ENCODE measurements at regions of chr3 and their contacts with region 1.

Region 1: DNA sequence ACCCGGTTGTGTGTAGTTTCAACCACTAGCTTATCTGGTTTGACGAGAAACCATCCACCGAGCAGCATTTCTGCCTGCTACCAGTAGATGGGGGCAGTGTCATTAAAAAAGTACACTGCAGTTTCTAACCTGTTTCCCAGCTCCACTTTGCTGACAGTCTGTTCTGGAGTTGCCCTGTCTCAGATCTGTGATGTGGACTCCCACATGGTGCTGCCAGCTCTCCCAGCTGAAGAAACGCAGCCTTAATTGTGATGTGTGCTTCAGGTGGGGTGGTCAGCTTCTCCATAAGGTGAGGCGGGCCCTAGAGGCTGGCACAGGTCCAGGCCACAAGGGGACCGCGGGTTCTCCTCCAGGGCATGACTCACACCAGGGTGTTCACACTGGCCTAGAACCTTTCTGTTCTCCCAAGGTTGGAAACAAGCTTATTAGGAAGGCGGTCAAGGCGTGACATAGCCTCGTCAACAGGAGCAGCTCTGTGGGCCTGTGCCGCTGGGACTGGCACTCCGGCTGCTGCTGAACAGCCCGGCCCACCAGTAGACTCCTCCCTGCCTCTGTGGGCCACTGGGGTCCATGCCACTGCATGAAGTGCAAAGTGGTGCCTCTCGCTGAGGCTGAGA is 2.9 kb upstream of the FAM43A start:
- DNase-seq: no peak
- ATAC-seq: peak; percentile 86
- H3K4me3 ChIP-seq: no peak overlapping the region
- H3K27ac ChIP-seq: no peak overlapping the region
- H3K4me1 ChIP-seq: peaks cover 36% of the 10 kb centered on the region
- H3K27me3 ChIP-seq: peaks cover 0 to 5% of the 10 kb centered on the region in 2 experiments; a peak in 2 of 4 replicates
- CTCF ChIP-seq: peak; percentile 88 to 97 (median 94); a peak in 5 of 6 replicates
- EP300 ChIP-seq: no peak
- POLR2A ChIP-seq: no peak
- RAD21 ChIP-seq: peak; percentile 95

Region 2: DNA sequence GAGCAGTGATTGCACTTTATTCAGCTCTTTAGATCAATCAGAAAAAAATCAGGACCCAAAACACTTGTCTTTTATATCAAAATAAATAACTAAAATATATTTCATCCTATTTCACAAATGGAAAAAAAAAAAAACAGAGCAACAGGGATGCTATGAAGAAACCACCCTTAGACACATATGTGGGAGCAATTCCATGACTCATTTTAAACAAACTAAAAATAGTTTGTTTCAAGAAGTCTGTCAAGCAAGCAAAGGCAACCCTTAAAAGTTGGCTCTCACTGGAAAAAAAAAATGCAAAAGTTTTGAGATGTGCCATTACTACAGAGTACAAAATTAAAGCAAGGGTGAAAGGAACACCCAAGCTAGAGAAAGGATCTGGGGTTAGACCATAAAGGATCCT is 201.7 kb before region 1 on chr3:
- CTCF ChIA-PET with region 1: no interaction called
- POLR2A ChIA-PET with region 1: no interaction called
- RAD21 ChIA-PET with region 1: no interaction called
- SMC1A ChIA-PET with region 1: no interaction called
- in situ Hi-C with region 1: no loop called
- intact Hi-C with region 1: no loop called
- DNase-seq: no peak
- ATAC-seq: no peak
- H3K4me3 ChIP-seq: peak overlapping the region; percentile 17; the same call in 1 of the 2 replicates
- H3K27ac ChIP-seq: no peak overlapping the region
- H3K4me1 ChIP-seq: peaks cover 5% of the 10 kb centered on the region; the same call in 1 of the 2 replicates
- H3K27me3 ChIP-seq: no peaks in the 10 kb centered on the region
- CTCF ChIP-seq: no peak
- EP300 ChIP-seq: no peak
- POLR2A ChIP-seq: no peak
- RAD21 ChIP-seq: no peak

Region 3: DNA sequence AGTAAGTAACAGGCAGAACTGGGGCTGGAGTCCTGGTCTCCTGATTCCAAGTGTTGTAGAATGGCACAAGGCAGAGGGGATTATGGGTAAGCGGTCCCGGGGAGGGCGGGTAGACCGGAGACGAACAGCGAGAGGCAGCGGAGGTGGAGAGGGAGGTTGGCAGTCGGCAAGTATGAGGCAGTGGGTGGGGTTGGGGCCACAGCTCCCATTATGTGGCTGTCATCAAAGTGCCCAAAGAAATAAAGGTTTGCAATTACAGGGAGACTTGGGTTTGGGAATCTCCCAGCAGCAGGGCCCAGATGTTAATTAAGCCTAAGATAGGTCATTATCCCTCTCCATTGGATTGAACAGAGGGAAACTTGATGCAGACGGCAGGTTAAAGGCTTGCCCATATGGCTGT is 19.7 kb after region 1 on chr3:
- CTCF ChIA-PET with region 1: no interaction called
- POLR2A ChIA-PET with region 1: no interaction called
- RAD21 ChIA-PET with region 1: no interaction called
- SMC1A ChIA-PET with region 1: no interaction called
- in situ Hi-C with region 1: no loop called
- intact Hi-C with region 1: no loop called
- DNase-seq: no peak
- ATAC-seq: no peak
- H3K4me3 ChIP-seq: no peak overlapping the region
- H3K27ac ChIP-seq: no peak overlapping the region
- H3K4me1 ChIP-seq: no peaks in the 10 kb centered on the region
- H3K27me3 ChIP-seq: peaks cover 0 to 3% of the 10 kb centered on the region in 2 experiments; a peak in 2 of 4 replicates
- CTCF ChIP-seq: no peak
- EP300 ChIP-seq: no peak
- POLR2A ChIP-seq: no peak
- RAD21 ChIP-seq: no peak

Region 4: DNA sequence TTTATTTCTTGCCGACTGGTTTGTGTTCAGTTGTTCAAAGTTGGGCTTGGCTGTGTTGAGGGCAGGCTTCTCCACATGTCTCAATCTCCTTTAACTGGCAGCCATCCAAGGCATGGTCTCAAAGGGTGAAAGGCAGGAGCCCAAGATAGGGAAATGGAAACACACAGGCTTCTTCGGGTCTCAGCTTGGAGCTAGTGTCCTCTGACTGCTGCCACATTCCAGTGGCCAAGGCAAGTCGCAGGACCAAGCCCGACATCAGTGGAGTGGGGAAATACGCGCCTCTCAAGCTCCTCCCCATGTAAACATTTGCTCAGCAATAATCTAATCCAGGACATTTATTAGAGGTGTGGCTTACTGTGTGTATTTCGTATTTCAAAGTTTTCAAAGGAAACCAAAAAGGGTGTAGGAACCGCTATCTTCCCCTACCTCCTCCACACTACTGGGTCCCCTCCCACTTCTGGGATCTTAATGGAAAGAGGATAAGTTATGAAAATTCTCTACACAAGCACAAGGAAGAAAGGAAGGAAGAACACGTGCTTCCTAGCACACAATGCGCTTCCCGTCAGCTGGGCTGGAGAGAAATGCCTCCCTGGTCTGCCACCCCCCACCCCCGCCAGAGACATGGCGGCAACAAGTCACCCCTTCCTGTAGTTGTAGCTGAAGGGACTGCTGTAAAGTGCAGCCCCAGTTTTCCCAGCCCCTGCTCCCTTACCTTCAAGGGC is 184.6 kb after region 1 on chr3:
- CTCF ChIA-PET with region 1: no interaction called
- POLR2A ChIA-PET with region 1: no interaction called
- RAD21 ChIA-PET with region 1: no interaction called
- SMC1A ChIA-PET with region 1: no interaction called
- in situ Hi-C with region 1: no loop called
- intact Hi-C with region 1: loop called (anchors 5 kb)
- DNase-seq: no peak
- ATAC-seq: no peak
- H3K4me3 ChIP-seq: no peak overlapping the region
- H3K27ac ChIP-seq: no peak overlapping the region
- H3K4me1 ChIP-seq: peaks cover 13% of the 10 kb centered on the region; the same call in 1 of the 2 replicates
- H3K27me3 ChIP-seq: peaks cover 0 to 3% of the 10 kb centered on the region in 2 experiments; a peak in 2 of 4 replicates
- CTCF ChIP-seq: no peak
- EP300 ChIP-seq: no peak
- POLR2A ChIP-seq: no peak
- RAD21 ChIP-seq: no peak

Region 5: DNA sequence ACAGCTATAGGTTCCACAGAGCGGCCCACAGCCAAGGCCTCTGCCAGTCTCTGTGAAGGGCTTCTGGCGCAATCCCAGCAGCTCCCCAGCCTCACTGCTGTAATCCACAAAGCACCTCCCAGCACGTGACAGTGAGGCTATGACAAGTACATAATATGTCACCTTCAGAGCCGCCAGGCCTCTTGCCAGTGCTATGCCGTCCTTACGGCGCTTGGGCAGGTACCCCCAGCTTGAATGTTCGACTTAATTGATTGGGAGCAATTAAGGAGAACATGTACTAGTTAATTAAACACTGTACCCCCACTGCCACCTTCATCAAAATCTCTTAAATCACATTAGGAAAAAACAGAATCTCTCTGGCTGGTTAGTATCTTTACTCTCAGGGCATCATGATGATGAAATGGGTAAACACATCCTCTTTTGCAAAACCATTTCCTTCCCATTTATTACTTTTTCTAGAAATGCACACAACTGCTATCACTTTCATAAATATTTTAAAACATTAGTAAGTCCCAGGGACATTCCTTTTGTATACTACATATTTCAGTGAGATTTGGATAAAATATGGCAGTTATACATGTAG is 418.3 kb after region 1 on chr3:
- CTCF ChIA-PET with region 1: interaction called, 61 read pairs
- POLR2A ChIA-PET with region 1: no interaction called
- RAD21 ChIA-PET with region 1: interaction called, 36 read pairs
- SMC1A ChIA-PET with region 1: interaction called, 23 read pairs
- in situ Hi-C with region 1: loop called (anchors 5 kb)
- intact Hi-C with region 1: loop called (anchors 1 kb)
- DNase-seq: no peak
- ATAC-seq: peak; percentile 68
- H3K4me3 ChIP-seq: no peak overlapping the region
- H3K27ac ChIP-seq: peak overlapping the region; percentile 43
- H3K4me1 ChIP-seq: peaks cover 28% of the 10 kb centered on the region
- H3K27me3 ChIP-seq: no peaks in the 10 kb centered on the region
- CTCF ChIP-seq: no peak
- EP300 ChIP-seq: no peak
- POLR2A ChIP-seq: no peak
- RAD21 ChIP-seq: no peak

Region 6: DNA sequence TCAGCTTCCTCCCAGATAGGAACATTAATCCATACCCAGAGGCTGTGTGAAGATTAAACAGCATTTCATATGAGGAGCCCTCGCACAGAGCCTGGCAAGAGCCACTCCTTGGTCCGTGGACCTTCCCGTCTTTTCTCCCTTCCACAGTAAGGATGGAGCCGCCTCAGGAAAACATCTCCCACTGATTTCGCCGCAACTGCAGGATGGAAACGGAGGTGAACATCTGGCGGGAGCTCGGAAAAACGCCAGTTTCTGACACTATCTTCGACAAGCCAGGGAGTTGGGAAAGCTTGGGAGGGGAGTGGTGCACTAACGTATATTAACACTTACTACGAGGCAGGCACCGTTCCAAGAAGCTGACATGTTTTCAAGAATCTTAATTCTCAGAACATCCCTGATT is 430.2 kb after region 1 on chr3:
- CTCF ChIA-PET with region 1: interaction called, 61 read pairs
- POLR2A ChIA-PET with region 1: no interaction called
- RAD21 ChIA-PET with region 1: interaction called, 36 read pairs
- SMC1A ChIA-PET with region 1: interaction called, 6 read pairs
- in situ Hi-C with region 1: no loop called
- intact Hi-C with region 1: no loop called
- DNase-seq: no peak
- ATAC-seq: no peak
- H3K4me3 ChIP-seq: no peak overlapping the region
- H3K27ac ChIP-seq: no peak overlapping the region
- H3K4me1 ChIP-seq: no peaks in the 10 kb centered on the region
- H3K27me3 ChIP-seq: no peaks in the 10 kb centered on the region
- CTCF ChIP-seq: no peak
- EP300 ChIP-seq: no peak
- POLR2A ChIP-seq: no peak
- RAD21 ChIP-seq: no peak

Region 7: DNA sequence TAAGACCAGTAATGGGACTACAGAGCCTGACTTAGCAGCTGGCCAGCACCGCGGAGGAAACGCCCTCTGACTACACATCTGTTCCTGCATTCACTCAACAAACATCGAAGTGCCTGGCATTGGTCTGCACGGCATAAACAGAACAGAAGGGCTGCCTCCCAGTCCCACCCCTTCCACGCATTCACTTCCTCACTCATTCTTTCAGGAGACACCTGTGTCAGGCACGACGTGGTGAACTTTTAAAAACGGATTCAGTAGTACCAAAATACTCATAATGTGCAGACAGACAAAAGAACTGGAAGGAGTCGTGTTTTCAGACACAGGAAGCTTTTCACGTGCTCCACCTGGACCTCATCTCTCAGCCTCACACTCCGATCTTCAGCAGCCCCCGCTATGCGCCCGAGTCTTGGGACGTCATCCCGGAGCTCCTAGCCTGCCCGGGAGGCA is 464.9 kb after region 1 on chr3:
- CTCF ChIA-PET with region 1: interaction called, 7 read pairs
- POLR2A ChIA-PET with region 1: no interaction called
- RAD21 ChIA-PET with region 1: interaction called, 11 read pairs
- SMC1A ChIA-PET with region 1: interaction called, 8 read pairs
- in situ Hi-C with region 1: no loop called
- intact Hi-C with region 1: no loop called
- DNase-seq: peak; percentile 91
- ATAC-seq: peak; percentile 83
- H3K4me3 ChIP-seq: peak overlapping the region; percentile 93
- H3K27ac ChIP-seq: peak overlapping the region; percentile 91
- H3K4me1 ChIP-seq: peaks cover 46% of the 10 kb centered on the region
- H3K27me3 ChIP-seq: no peaks in the 10 kb centered on the region
- CTCF ChIP-seq: no peak
- EP300 ChIP-seq: no peak
- POLR2A ChIP-seq: peak; percentile 79
- RAD21 ChIP-seq: no peak

Region 8: GRCh38 chr3:195259475-195260279 is 576.9 kb after region 1 on chr3:
- CTCF ChIA-PET with region 1: interaction called, 44 read pairs
- POLR2A ChIA-PET with region 1: interaction called, 4 read pairs
- RAD21 ChIA-PET with region 1: interaction called, 41 read pairs
- SMC1A ChIA-PET with region 1: interaction called, 34 read pairs
- in situ Hi-C with region 1: no loop called
- intact Hi-C with region 1: loop called (anchors 1 kb)
- DNase-seq: peak; percentile 69
- ATAC-seq: peak; percentile 85
- H3K4me3 ChIP-seq: peak overlapping the region; percentile 77; the same call in 1 of the 2 replicates
- H3K27ac ChIP-seq: peak overlapping the region; percentile 85
- H3K4me1 ChIP-seq: peaks cover 21% of the 10 kb centered on the region
- H3K27me3 ChIP-seq: no peaks in the 10 kb centered on the region
- CTCF ChIP-seq: peak; percentile 54 to 77 (median 54); a peak in 5 of 6 replicates
- EP300 ChIP-seq: peak; percentile 64 to 82; a peak in 3 of 4 replicates
- POLR2A ChIP-seq: peak; percentile 85
- RAD21 ChIP-seq: peak; percentile 89

Region 9: DNA sequence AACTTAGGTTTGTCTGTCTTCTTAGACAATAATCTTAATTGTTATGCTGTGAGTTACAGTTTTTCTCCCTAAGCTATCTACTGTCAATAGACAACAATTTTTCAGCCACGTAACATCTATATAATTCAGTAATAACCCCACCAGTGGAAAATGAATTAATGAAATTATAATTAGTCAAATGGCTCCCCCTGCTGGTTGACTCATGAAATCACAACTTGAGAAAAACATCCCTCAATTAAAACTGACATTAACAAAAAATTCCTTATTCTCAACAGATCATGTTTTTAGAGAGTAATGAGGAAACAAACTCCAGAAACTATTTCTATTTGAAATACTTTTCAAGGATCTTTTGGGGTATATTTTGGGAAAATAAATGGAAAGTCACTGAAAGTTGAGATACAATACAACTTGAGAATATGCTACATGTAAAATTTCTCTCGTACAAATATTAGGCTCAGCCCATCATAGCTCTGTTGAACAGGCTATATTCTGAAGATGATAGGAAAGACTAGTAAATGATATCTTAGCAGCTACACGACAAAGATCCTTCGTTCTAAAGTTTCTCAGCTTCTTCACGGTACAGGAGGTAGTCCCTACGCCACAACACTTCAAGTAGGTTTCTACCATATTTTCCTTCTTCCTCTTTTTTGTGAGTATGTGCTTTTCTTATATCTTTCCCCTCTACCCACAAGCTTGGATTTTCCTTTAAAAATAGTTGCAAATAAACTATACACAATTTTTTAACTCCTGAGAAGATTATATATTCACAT is 839.6 kb after region 1 on chr3:
- CTCF ChIA-PET with region 1: interaction called, 4 read pairs
- POLR2A ChIA-PET with region 1: no interaction called
- RAD21 ChIA-PET with region 1: interaction called, 3 read pairs
- SMC1A ChIA-PET with region 1: interaction called, 4 read pairs
- in situ Hi-C with region 1: no loop called
- intact Hi-C with region 1: loop called (anchors 5 kb)
- DNase-seq: no peak
- ATAC-seq: peak; percentile 22; the same call in 2 of the 3 replicates
- H3K4me3 ChIP-seq: no peak overlapping the region
- H3K27ac ChIP-seq: no peak overlapping the region
- H3K4me1 ChIP-seq: no peaks in the 10 kb centered on the region
- H3K27me3 ChIP-seq: no peaks in the 10 kb centered on the region
- CTCF ChIP-seq: peak; percentile 27 to 65 (median 48); a peak in 5 of 6 replicates
- EP300 ChIP-seq: no peak
- POLR2A ChIP-seq: no peak
- RAD21 ChIP-seq: peak; percentile 69

Measured in GM12878 (cell line).